ENCODE measurements at regions of chr10 and their contacts with region 1.

Region 1: DNA sequence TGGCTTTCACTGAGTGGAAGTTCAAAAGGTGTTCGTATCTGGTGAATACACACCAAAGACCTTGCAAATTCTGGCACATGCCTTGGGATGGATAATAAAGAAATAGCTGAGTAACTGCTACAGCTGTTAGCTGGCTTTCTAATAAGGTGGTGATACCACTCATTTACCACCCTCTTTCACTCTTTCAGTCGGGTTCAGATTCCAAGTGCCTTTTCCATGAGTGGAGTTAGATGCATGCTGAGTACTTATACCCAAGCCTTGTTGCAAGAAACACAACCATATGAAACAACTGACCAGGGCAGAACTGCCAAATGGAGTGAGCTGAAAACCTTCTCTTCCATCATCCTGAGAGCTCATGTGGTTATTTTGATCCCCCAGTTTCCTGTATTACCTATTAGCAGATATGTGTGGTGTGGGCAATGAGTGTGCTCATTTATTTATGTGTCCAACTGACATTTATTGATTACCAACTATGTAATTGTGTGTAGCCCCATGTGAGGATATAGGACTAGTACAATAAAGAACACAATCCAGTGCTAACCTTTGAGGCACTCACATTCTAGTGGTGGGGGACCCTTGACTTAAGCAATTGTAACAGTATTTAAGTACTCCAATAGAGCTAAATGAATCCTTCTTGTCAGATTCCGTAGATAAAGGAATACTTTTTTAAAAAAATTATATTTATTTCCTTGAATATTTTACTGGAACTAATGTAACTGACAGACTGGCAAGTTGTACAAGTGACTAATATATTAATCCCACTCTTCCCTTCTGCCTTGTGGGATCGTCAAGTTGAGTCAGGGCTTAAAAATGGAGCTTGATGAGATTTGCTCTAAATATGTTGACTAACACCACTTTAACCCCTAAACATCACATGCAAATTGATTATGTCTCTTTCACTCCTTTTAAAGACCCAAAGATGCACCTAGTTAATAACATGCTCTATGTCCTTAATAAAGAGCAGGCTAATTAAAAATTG is 124.7 kb downstream of the ARID5B start:
- DNase-seq: peak; percentile 82
- H3K4me3 ChIP-seq: no peak overlapping the region
- H3K27ac ChIP-seq: peak overlapping the region; percentile 92
- H3K4me1 ChIP-seq: peaks cover 49% of the 10 kb centered on the region
- H3K27me3 ChIP-seq: no peaks in the 10 kb centered on the region
- CTCF ChIP-seq: no peak

Region 2: DNA sequence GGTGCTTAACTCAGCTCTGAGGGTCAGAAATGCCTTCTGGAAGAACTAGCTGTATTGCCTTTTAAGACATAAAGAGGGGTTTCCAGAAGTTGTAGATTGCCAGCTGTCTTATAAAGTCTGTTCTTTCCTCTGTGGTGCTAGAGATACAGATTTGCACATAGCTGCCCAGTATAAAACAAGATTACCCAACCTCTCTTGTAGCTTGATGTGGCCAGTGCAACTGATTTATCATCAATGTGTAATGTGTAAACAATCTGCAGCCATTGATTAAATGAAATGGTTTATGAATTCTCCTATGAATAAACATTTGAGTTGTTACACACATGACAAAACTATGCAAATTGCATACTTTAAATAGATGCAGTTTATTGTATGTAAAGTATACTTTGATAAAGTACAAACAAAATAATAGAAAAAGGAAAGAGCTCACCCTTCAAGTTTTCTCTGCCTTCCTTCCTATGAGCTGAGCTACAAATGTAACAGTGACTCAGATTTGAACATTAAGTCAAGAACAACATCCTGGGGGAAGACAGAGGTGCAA is 768.2 kb before region 1 on chr10:
- CTCF ChIA-PET with region 1: no interaction called
- dilution Hi-C with region 1: no loop called
- in situ Hi-C with region 1: no loop called
- intact Hi-C with region 1: no loop called
- DNase-seq: no peak
- H3K4me3 ChIP-seq: no peak overlapping the region
- H3K27ac ChIP-seq: no peak overlapping the region
- H3K4me1 ChIP-seq: no peaks in the 10 kb centered on the region
- H3K27me3 ChIP-seq: peaks cover 1% of the 10 kb centered on the region
- CTCF ChIP-seq: no peak

Region 3: GRCh38 chr10:61385231-61386001 is 640.8 kb before region 1 on chr10:
- CTCF ChIA-PET with region 1: no interaction called
- dilution Hi-C with region 1: no loop called
- in situ Hi-C with region 1: no loop called
- intact Hi-C with region 1: no loop called
- DNase-seq: no peak
- H3K4me3 ChIP-seq: no peak overlapping the region
- H3K27ac ChIP-seq: no peak overlapping the region
- H3K4me1 ChIP-seq: no peaks in the 10 kb centered on the region
- H3K27me3 ChIP-seq: no peaks in the 10 kb centered on the region
- CTCF ChIP-seq: no peak

Region 4: GRCh38 chr10:61835069-61835945 is 190.9 kb before region 1 on chr10:
- CTCF ChIA-PET with region 1: no interaction called
- dilution Hi-C with region 1: no loop called
- in situ Hi-C with region 1: no loop called
- intact Hi-C with region 1: loop called (anchors 2 kb)
- DNase-seq: peak; percentile 54
- H3K4me3 ChIP-seq: no peak overlapping the region
- H3K27ac ChIP-seq: peak overlapping the region; percentile 63
- H3K4me1 ChIP-seq: peaks cover 21% of the 10 kb centered on the region
- H3K27me3 ChIP-seq: no peaks in the 10 kb centered on the region
- CTCF ChIP-seq: peak; percentile 38 to 67

Region 5: GRCh38 chr10:61943674-61944410 is 82.3 kb before region 1 on chr10:
- CTCF ChIA-PET with region 1: interaction called, 3 read pairs
- dilution Hi-C with region 1: no loop called
- in situ Hi-C with region 1: no loop called
- intact Hi-C with region 1: loop called (anchors 5 kb)
- DNase-seq: peak; percentile 59
- H3K4me3 ChIP-seq: peak overlapping the region in 2 of 3 experiments; percentile 34 to 58
- H3K27ac ChIP-seq: peak overlapping the region; percentile 96
- H3K4me1 ChIP-seq: peaks cover 23% of the 10 kb centered on the region
- H3K27me3 ChIP-seq: no peaks in the 10 kb centered on the region
- CTCF ChIP-seq: peak; percentile 16 to 29

Region 6: GRCh38 chr10:61992671-61993668 is 33.2 kb before region 1 on chr10:
- CTCF ChIA-PET with region 1: no interaction called
- dilution Hi-C with region 1: no loop called
- in situ Hi-C with region 1: no loop called
- intact Hi-C with region 1: loop called (anchors 5 kb)
- DNase-seq: peak; percentile 90
- H3K4me3 ChIP-seq: peak overlapping the region; percentile 3 to 32 (median 24)
- H3K27ac ChIP-seq: peak overlapping the region; percentile 88
- H3K4me1 ChIP-seq: peaks cover 15% of the 10 kb centered on the region
- H3K27me3 ChIP-seq: no peaks in the 10 kb centered on the region
- CTCF ChIP-seq: no peak

Region 7: GRCh38 chr10:62109587-62110293 is 83.5 kb after region 1 on chr10:
- CTCF ChIA-PET with region 1: no interaction called
- dilution Hi-C with region 1: no loop called
- in situ Hi-C with region 1: no loop called
- intact Hi-C with region 1: no loop called
- DNase-seq: no peak
- H3K4me3 ChIP-seq: no peak overlapping the region
- H3K27ac ChIP-seq: no peak overlapping the region
- H3K4me1 ChIP-seq: peaks cover 5% of the 10 kb centered on the region
- H3K27me3 ChIP-seq: no peaks in the 10 kb centered on the region
- CTCF ChIP-seq: no peak

Region 8: GRCh38 chr10:62268399-62269114 is 242.4 kb after region 1 on chr10 and contains the start of gene RTKN2:
- CTCF ChIA-PET with region 1: interaction called, 11 read pairs
- dilution Hi-C with region 1: no loop called
- in situ Hi-C with region 1: no loop called
- intact Hi-C with region 1: no loop called
- DNase-seq: peak; percentile 88
- H3K4me3 ChIP-seq: peak within 1 kb of the TSS; percentile 67 to 93 (median 90)
- H3K27ac ChIP-seq: peak within 1 kb of the TSS; percentile 33
- H3K4me1 ChIP-seq: peaks cover 29% of the 10 kb centered on the region
- H3K27me3 ChIP-seq: no peaks in the 10 kb centered on the region
- CTCF ChIP-seq: no peak
- total RNA-seq, gene RTKN2: 2.7 to 4.5 TPM

Measured in mammary epithelial cell (primary cell).